ENCODE measurements at regions of chr2 and their contacts with region 1.

Region 1: DNA sequence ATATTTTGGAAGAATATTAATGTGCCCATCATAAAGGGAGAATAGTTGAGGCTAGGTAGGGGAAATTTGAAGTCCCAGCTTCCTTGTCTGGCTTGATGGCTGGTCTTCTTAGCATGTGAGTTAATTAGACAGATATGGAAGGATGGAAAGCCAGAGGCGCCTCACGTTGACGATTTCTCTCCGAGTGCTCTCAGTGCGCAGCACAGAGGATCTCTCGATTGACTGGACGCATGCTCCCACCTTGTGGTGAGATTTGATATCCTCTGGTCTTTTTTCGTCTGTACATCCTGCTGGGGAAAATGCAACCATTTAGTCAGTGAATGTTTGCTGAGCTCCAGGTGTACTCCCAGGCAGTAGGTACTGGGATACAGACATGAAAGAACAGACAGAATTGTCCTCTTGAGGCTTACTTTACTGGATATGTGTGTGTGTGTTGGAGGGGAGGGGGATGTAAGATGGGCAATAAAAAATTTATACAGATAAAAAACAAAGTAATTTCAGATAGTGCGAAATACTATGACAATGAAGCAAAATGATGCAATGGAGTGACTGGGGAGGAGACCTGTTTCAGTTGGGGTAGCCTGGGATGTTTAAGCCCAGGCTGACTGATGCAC is 66.9 kb upstream of the ZNG1B start:
- DNase-seq: peak; percentile 74
- H3K4me3 ChIP-seq: no peak overlapping the region
- H3K27ac ChIP-seq: no peak overlapping the region
- H3K4me1 ChIP-seq: peaks cover 6% of the 10 kb centered on the region
- H3K27me3 ChIP-seq: no peaks in the 10 kb centered on the region
- CTCF ChIP-seq: peak; percentile 49 to 71

Region 2: DNA sequence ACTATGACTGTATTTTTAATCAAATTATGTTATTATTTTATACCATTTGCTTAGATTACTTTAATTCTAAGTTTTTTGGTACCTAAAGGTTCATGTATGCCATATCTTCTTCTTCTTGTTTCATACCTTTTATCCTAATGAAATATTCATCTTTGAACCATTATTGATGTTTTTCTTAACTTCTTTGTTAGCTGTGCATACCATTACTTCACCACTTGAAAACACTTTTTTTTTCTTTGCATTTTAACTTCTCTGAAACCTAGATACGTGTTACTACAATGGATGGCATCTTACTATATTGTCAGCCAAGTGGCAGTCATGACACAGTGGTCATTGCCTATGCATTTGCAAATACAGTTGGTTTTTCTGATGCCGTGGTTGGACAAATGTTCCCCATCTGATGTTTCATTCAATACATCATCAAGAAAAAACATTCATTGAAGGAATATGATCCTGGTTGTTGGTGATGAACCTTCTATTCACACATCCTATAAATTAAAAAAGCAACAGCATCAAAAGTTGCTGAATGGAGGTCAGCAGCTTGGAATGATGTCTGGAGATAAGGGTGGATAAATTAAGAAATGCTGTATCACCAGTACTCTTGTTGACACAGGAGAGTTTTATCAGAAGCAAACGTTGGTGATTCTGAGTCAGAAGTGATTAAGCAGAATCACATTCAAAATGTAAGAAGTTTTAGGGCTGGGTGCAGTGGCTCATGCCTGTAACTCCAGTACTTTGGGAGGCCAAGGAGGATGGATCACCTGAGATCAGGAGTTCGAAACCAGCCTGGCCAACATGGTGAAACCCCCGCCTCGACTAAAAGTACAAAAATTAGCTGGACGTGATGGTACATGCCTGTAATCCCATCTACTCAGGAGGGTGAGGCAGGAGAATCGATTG is 357.9 kb before region 1 on chr2:
- CTCF ChIA-PET with region 1: no interaction called
- dilution Hi-C with region 1: no loop called
- in situ Hi-C with region 1: no loop called
- intact Hi-C with region 1: no loop called
- DNase-seq: peak; percentile 76
- H3K4me3 ChIP-seq: no peak overlapping the region
- H3K27ac ChIP-seq: peak overlapping the region; percentile 1
- H3K4me1 ChIP-seq: peaks cover 5% of the 10 kb centered on the region
- H3K27me3 ChIP-seq: no peaks in the 10 kb centered on the region
- CTCF ChIP-seq: no peak

Region 3: DNA sequence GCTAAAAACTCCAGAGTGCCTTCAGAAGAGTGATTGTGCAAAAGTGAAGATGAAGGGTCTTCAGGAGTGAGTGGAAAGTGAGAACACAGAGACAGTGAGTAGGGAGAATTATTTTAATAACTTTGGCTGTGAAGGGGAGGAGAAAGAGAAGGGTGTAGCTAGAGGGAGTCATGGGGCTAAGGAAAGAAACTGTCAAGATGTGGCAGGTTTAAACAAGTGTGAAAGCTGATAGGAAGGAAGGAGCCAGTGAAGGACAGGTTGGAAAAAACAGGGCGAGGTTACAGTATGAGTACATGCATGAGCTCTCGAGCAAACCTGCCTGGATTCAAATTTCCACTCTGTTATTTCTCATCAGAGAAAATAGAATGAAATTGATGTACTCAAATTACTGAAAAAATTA is 285.0 kb before region 1 on chr2:
- CTCF ChIA-PET with region 1: no interaction called
- dilution Hi-C with region 1: no loop called
- in situ Hi-C with region 1: no loop called
- intact Hi-C with region 1: loop called (anchors 1 kb)
- DNase-seq: peak; percentile 92
- H3K4me3 ChIP-seq: no peak overlapping the region
- H3K27ac ChIP-seq: peak overlapping the region; percentile 59
- H3K4me1 ChIP-seq: peaks cover 22% of the 10 kb centered on the region
- H3K27me3 ChIP-seq: no peaks in the 10 kb centered on the region
- CTCF ChIP-seq: peak in 1 of 2 donors; percentile 19

Region 4: DNA sequence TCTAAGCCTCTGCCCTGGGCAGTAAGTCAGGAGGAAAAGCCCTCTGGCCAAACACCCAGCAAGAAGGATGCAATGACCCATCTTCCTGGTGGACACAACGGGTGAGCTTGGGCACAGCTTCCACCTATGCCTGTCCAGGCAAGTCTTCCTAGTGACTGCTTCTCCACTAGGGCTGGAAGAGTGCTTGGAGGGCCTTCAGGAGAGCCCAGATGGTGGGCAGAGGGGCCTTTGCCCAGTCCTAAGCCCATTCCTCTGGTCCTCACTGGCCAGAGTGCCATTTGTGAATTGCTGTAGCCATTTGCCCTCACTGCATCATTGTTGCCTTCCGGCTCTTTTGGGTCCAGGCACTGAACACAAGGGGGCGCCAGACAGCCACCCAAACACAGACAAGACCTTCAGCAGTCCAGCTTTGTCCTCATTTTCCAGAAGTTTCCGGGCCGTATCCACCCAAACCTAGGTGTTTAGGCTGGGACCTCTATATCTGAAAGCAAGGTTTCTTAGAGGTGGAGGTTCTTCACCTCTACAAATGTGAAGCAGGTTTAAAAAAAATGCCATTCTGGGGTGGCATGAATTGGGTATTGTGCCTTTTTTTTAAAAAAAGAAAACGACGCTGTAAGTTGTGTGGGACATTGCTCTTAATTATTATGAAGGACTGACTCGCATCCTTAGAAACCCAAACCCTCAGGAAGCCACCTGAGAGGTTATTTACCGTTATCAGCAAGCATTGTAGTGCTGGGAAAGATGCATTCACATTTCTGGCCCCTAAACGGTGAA is 121.4 kb before region 1 on chr2:
- CTCF ChIA-PET with region 1: interaction called, 4 read pairs
- dilution Hi-C with region 1: no loop called
- in situ Hi-C with region 1: loop called in 1 of 2 experiments (anchors 5 kb)
- intact Hi-C with region 1: loop called (anchors 1 kb)
- DNase-seq: peak; percentile 69
- H3K4me3 ChIP-seq: no peak overlapping the region
- H3K27ac ChIP-seq: no peak overlapping the region
- H3K4me1 ChIP-seq: peaks cover 29% of the 10 kb centered on the region
- H3K27me3 ChIP-seq: no peaks in the 10 kb centered on the region
- CTCF ChIP-seq: peak; percentile 91 to 97

Region 5: DNA sequence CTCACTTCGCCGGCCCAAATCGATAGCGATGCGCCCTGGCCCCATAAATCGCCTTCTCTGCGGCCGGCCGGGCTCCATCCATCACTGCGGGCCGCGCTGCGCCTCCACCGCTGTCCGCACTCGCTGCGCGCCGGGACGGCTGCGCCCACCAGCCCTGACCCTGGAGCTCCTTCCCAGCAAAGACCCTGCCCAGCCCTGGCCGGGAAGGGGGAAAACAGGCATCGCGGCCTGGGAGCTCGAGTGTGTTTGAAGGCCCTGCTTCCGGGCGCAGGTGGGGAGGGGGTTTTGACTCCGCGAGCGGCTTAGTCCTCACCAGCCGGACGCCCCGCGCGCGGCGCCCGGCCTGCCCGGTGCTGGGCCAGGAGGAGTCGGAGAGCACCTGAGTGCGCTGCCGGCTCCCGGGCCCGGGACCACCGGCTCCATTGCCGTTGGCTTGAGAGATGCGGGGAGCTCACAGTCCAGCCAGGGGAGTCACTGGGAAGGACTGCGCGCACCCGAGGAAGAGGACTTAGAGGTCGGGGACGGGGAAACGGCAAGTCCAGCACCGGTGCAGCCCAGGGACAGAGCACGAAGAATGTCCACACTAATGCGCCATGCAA is 93.0 kb before region 1 on chr2:
- CTCF ChIA-PET with region 1: no interaction called
- dilution Hi-C with region 1: no loop called
- in situ Hi-C with region 1: no loop called
- intact Hi-C with region 1: loop called (anchors 1 kb)
- DNase-seq: no peak
- H3K4me3 ChIP-seq: no peak overlapping the region
- H3K27ac ChIP-seq: no peak overlapping the region
- H3K4me1 ChIP-seq: peaks cover 11% of the 10 kb centered on the region
- H3K27me3 ChIP-seq: no peaks in the 10 kb centered on the region
- CTCF ChIP-seq: no peak

Region 6: GRCh38 chr2:113298176-113298575 is 72.4 kb before region 1 on chr2:
- CTCF ChIA-PET with region 1: no interaction called
- dilution Hi-C with region 1: no loop called
- in situ Hi-C with region 1: no loop called
- intact Hi-C with region 1: loop called (anchors 5 kb)
- DNase-seq: no peak
- H3K4me3 ChIP-seq: no peak overlapping the region
- H3K27ac ChIP-seq: no peak overlapping the region
- H3K4me1 ChIP-seq: no peaks in the 10 kb centered on the region
- H3K27me3 ChIP-seq: no peaks in the 10 kb centered on the region
- CTCF ChIP-seq: no peak